ENCODE measurements at regions of chr17 and their contacts with region 1.

Region 1: GRCh38 chr17:40433551-40434415 is 9.5 kb upstream of the IGFBP4 start:
- DNase-seq: no peak
- H3K4me3 ChIP-seq: no peak overlapping the region
- H3K27ac ChIP-seq: peak overlapping the region; percentile 63 to 85 (median 74)
- H3K4me1 ChIP-seq: peaks cover 0 to 25% (median 13%) of the 10 kb centered on the region in 4 donors
- H3K27me3 ChIP-seq: no peaks in the 10 kb centered on the region
- CTCF ChIP-seq: peak; percentile 37 to 48 (median 47)
- EP300 ChIP-seq: no peak
- POLR2A ChIP-seq: no peak

Region 2: GRCh38 chr17:40499551-40500174 is 65.9 kb after region 1 on chr17:
- in situ Hi-C with region 1: no loop called
- intact Hi-C with region 1: no loop called
- DNase-seq: peak; percentile 92
- H3K4me3 ChIP-seq: peak overlapping the region in 3 of 4 donors; percentile 7 to 33 (median 20)
- H3K27ac ChIP-seq: peak overlapping the region; percentile 79 to 86 (median 82)
- H3K4me1 ChIP-seq: peaks cover 17 to 46% (median 40%) of the 10 kb centered on the region in 4 donors
- H3K27me3 ChIP-seq: no peaks in the 10 kb centered on the region
- CTCF ChIP-seq: peak in 1 of 5 experiments; percentile 20
- EP300 ChIP-seq: no peak
- POLR2A ChIP-seq: peak; percentile 25

Region 3: GRCh38 chr17:40536295-40537171 is 102.8 kb after region 1 on chr17:
- in situ Hi-C with region 1: loop called in 3 of 4 experiments (anchors 10 to 25 kb)
- intact Hi-C with region 1: no loop called
- DNase-seq: no peak
- H3K4me3 ChIP-seq: no peak overlapping the region
- H3K27ac ChIP-seq: peak overlapping the region; percentile 31 to 92 (median 76)
- H3K4me1 ChIP-seq: peaks cover 24 to 58% (median 34%) of the 10 kb centered on the region in 4 donors
- H3K27me3 ChIP-seq: no peaks in the 10 kb centered on the region
- CTCF ChIP-seq: no peak
- EP300 ChIP-seq: peak; percentile 75
- POLR2A ChIP-seq: no peak

Region 4: DNA sequence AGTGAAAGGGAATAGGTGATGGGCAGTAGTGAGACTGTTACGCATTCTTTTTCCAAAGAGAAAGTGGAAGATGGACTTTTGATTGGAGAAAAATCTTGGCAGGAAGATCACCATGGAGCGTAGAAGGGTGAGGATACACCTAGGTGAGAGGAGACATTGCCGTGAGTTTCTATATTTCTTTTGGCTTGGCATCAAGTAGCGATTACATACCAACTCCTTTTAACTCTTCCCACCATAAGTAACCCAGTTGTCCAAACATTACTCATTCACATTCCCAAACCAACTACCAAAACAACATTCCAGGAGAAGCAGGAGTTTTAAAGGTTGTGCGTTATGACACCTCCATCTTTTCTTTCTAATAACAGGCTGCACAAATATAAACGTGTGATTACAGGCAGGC is 376.7 kb after region 1 on chr17:
- in situ Hi-C with region 1: no loop called
- intact Hi-C with region 1: no loop called
- DNase-seq: no peak
- H3K4me3 ChIP-seq: no peak overlapping the region
- H3K27ac ChIP-seq: no peak overlapping the region
- H3K4me1 ChIP-seq: no peaks in the 10 kb centered on the region
- H3K27me3 ChIP-seq: peaks cover 92% of the 10 kb centered on the region
- CTCF ChIP-seq: no peak
- EP300 ChIP-seq: no peak
- POLR2A ChIP-seq: no peak

Measured in transverse colon (tissue), 4 donors.